Activated naive CD4-positive, alpha-beta T cell treated with anti-CD3 and anti-CD28 coated beads for 36 hours (primary cell): ENCODE measurements at regions of chr5 and their contacts with region 1.

Region 1: DNA sequence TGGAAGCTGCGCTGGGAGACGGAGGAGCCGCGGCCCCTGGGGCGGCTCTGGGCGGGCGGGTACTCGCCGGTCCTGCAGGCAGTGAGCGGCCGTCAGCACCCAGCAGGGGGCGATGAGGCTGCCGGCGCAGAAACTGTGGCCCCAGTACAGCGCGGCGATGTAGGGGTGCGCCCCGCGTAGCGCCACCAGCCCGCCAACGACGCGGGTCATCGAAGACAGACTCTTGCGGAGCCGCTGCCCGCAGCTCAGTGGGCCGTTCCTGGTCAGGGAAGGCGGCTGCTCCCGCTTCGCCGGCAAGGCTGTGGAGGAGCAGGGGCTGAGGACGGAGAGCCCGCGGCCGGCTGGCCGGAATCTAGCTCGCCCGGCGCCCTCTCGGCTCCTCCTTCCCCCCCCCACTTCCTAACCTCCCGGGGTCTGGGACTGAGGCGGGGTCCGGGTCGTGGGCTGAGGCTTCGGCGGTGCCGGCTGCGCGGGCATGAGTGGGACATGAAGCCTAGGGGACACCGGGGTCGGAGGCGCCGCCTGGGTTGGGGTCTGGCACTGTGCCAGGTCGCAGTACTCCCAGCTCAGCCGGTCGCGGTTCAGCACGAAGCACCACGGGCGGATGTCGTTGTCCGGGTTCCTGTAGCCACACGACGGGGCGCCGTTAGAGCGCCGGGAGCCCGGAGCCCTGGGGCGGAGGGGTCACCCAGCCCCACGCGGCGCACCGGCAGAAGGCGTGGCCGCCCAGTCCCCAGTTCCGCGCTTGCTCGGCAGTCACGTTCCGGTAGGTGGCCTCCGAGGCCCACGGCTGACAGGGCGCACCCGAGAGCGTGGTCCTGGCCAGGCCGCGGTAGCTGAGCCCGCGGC is 3.6 kb upstream of the PFN3 start:
- DNase-seq: peak; percentile 90
- H3K4me3 Mint-ChIP-seq: peak overlapping the region; percentile 78
- H3K27ac Mint-ChIP-seq: no peak overlapping the region
- H3K4me1 Mint-ChIP-seq: peaks cover 19% of the 10 kb centered on the region
- H3K27me3 Mint-ChIP-seq: peaks cover 15% of the 10 kb centered on the region

Region 2: GRCh38 chr5:177077335-177077734 is 326.7 kb before region 1 on chr5:
- CTCF ChIA-PET with region 1: no interaction called
- intact Hi-C with region 1: no loop called
- DNase-seq: no peak
- H3K4me3 Mint-ChIP-seq: no peak overlapping the region
- H3K27ac Mint-ChIP-seq: no peak overlapping the region
- H3K4me1 Mint-ChIP-seq: no peaks in the 10 kb centered on the region
- H3K27me3 Mint-ChIP-seq: no peaks in the 10 kb centered on the region

Region 3: GRCh38 chr5:177113566-177114424 is 290.2 kb before region 1 on chr5:
- CTCF ChIA-PET with region 1: interaction called, 3 read pairs
- intact Hi-C with region 1: loop called (anchors 1 kb)
- DNase-seq: peak; percentile 89
- H3K4me3 Mint-ChIP-seq: no peak overlapping the region
- H3K27ac Mint-ChIP-seq: no peak overlapping the region
- H3K4me1 Mint-ChIP-seq: peaks cover 20% of the 10 kb centered on the region
- H3K27me3 Mint-ChIP-seq: no peaks in the 10 kb centered on the region

Region 4: GRCh38 chr5:177212242-177212641 is 191.8 kb before region 1 on chr5:
- CTCF ChIA-PET with region 1: no interaction called
- intact Hi-C with region 1: no loop called
- DNase-seq: no peak
- H3K4me3 Mint-ChIP-seq: no peak overlapping the region
- H3K27ac Mint-ChIP-seq: no peak overlapping the region
- H3K4me1 Mint-ChIP-seq: peaks cover 9% of the 10 kb centered on the region
- H3K27me3 Mint-ChIP-seq: no peaks in the 10 kb centered on the region

Region 5: DNA sequence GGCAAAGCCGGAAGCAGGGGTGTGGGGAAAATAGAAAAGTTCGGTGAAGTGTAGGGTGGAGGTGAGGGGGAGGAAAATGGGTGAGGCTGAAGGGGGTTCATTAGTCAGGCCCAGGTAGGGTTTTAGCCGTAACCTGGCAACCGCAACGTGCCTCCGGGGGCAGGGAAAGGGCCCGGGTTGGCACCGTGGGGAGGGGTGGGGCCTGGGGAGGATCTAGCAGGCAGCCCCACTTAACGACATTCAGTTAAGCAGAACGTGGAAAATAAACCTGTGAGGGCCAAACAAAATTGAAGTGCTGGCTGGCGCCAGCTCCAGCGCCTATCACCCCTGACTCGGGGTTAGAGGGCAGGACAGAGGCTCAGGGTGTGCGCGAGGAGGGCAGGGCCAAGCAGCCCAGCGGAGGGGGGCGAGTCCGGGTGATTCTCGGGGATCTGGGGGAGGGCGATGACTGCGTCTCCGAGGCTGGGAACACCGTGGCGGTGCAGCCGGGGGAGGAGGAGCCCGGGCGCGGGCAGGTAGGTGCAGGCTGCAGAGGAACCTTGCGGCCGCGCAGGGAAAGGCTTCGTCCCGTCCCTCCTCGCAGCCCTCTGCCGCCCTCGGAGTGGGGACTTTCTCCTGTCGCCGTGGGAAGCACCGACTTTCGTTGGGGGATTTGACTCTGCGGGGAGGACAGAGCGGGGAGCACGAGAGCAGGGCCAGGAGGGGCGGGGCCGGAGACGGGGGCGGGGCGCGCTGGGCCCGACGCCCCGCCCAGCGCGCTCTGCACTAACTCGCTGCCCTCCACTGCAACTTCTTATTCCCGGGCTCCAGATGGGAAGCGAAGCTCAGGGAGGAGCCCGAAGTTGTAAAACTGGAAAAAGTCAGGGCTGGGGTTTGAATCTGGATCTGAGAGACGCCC is 41.2 kb before region 1 on chr5:
- CTCF ChIA-PET with region 1: interaction called, 14 read pairs
- intact Hi-C with region 1: no loop called
- DNase-seq: peak; percentile 89
- H3K4me3 Mint-ChIP-seq: peak overlapping the region; percentile 75
- H3K27ac Mint-ChIP-seq: peak overlapping the region; percentile 84
- H3K4me1 Mint-ChIP-seq: peaks cover 74% of the 10 kb centered on the region
- H3K27me3 Mint-ChIP-seq: no peaks in the 10 kb centered on the region

Region 6: DNA sequence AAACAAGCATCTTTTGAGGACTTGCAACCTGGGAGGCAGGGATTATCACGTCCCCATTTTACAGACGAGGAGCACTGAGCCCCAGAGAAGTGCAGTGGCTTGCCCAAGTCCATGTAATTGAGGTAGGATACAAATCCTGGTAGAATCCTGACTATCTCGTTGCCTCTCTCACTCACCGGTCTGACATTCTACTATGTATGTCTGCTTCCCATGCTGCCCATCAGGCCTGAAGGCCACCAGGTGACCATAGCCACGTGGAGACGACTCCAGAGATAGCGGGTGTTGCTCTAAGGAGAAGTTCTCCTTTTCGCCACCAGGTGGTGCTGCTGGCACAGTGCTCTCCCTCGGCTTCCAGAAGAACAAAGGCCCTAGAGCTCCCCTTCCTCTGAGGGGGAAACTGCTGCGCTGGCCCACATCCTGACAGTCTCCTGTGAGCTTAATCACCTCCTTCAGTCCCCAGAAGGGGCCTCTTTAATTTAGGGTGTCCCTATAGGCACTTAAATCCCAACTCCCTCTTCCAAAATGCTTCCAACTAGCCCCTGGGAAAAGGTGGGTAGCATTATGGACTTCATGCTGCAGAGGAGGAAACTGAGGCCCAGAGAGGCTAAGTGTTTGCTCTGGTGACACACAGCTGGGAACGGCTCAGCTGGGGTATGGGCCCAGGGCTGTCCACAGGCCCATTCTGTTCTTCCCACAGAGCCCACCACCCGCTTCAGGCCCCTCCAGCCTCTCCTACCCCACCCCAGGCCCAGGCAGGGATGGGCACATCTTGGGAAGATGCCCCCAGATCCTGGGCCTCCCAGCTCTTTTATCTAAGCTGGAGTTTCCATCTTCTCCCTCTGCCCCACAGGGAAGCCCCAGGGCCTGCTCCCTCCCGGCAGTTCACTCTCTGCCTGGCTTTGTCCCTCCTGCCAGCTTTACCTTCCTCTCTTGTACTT is 13.4 kb before region 1 on chr5:
- CTCF ChIA-PET with region 1: interaction called, 138 read pairs
- intact Hi-C with region 1: loop called (anchors 1 kb)
- DNase-seq: peak; percentile 95
- H3K4me3 Mint-ChIP-seq: peak overlapping the region; percentile 10
- H3K27ac Mint-ChIP-seq: peak overlapping the region; percentile 79
- H3K4me1 Mint-ChIP-seq: peaks cover 34% of the 10 kb centered on the region
- H3K27me3 Mint-ChIP-seq: no peaks in the 10 kb centered on the region

Region 7: GRCh38 chr5:177431317-177432142 is 27.5 kb after region 1 on chr5:
- CTCF ChIA-PET with region 1: interaction called, 111 read pairs
- intact Hi-C with region 1: loop called (anchors 1 kb)
- DNase-seq: peak; percentile 79
- H3K4me3 Mint-ChIP-seq: peak overlapping the region; percentile 95
- H3K27ac Mint-ChIP-seq: peak overlapping the region; percentile 95
- H3K4me1 Mint-ChIP-seq: peaks cover 74% of the 10 kb centered on the region
- H3K27me3 Mint-ChIP-seq: no peaks in the 10 kb centered on the region

Region 8: DNA sequence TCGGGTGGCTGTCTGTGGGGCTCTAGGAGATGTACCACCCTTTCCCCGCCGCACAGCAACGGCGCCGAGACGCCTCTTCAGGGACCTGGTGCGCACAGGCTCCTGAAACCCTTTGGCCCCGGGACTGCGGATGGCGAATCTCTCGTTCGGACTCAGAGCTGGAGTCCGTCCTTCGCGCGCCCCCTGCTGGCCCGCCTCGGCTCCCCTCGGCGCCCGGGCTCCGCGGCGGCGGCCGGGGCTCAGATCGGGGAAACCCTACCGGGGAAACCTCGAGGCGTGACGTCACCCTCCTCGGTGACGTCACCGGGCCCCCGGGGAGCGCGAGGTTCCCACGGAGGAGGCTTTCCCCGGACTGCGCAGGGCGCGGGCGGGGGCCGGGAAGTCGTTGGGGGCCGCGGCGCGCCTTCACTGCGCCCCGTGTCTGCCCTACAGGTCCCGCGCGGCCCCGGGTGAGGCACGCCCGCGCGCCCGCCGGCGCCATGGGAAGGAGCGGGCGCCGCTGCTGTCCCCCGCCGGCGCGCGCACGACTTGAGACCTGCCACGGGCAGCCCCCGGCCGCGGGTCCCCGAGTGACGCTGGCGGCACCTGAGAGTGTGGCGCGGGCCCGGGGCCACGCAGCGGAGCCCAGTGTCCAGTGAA is 50.5 kb after region 1 on chr5:
- CTCF ChIA-PET with region 1: interaction called, 161 read pairs
- intact Hi-C with region 1: loop called (anchors 1 kb)
- DNase-seq: peak; percentile 91
- H3K4me3 Mint-ChIP-seq: peak overlapping the region; percentile 79
- H3K27ac Mint-ChIP-seq: no peak overlapping the region
- H3K4me1 Mint-ChIP-seq: peaks cover 20% of the 10 kb centered on the region
- H3K27me3 Mint-ChIP-seq: no peaks in the 10 kb centered on the region

Region 9: DNA sequence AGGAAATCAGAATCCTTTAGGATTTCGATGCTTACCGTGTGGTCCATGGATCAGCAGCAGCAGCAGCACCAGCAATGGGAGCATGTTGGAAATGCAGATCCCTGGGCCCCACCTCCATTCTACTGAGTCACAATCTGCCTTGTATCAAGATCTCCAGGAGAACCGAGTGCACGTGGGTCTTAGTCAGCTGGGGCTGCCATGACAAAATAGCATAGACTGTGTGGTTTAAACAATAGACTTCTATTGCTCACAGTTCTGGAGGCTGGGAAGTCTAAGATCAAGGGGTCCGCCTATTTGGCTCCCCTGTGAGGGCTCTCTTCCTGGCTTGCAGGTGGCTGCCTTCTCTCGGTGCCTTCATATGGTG is 593.3 kb after region 1 on chr5:
- CTCF ChIA-PET with region 1: no interaction called
- intact Hi-C with region 1: no loop called
- DNase-seq: no peak
- H3K4me3 Mint-ChIP-seq: no peak overlapping the region
- H3K27ac Mint-ChIP-seq: no peak overlapping the region
- H3K4me1 Mint-ChIP-seq: no peaks in the 10 kb centered on the region
- H3K27me3 Mint-ChIP-seq: peaks cover 16% of the 10 kb centered on the region